ENCODE measurements at regions of chr13 and their contacts with region 1.

Region 1: GRCh38 chr13:45396533-45397095 is 21.6 kb downstream of the SLC25A30 start:
- DNase-seq: no peak
- ATAC-seq: peak in 4 of 8 donors; percentile 10 to 43 (median 20)
- H3K4me3 ChIP-seq: no peak overlapping the region
- H3K27ac ChIP-seq: peak overlapping the region; percentile 8 to 75 (median 56)
- H3K4me1 ChIP-seq: peaks cover 0 to 78% (median 35%) of the 10 kb centered on the region in 9 donors
- H3K27me3 ChIP-seq: no peaks in the 10 kb centered on the region
- CTCF ChIP-seq: no peak

Region 2: DNA sequence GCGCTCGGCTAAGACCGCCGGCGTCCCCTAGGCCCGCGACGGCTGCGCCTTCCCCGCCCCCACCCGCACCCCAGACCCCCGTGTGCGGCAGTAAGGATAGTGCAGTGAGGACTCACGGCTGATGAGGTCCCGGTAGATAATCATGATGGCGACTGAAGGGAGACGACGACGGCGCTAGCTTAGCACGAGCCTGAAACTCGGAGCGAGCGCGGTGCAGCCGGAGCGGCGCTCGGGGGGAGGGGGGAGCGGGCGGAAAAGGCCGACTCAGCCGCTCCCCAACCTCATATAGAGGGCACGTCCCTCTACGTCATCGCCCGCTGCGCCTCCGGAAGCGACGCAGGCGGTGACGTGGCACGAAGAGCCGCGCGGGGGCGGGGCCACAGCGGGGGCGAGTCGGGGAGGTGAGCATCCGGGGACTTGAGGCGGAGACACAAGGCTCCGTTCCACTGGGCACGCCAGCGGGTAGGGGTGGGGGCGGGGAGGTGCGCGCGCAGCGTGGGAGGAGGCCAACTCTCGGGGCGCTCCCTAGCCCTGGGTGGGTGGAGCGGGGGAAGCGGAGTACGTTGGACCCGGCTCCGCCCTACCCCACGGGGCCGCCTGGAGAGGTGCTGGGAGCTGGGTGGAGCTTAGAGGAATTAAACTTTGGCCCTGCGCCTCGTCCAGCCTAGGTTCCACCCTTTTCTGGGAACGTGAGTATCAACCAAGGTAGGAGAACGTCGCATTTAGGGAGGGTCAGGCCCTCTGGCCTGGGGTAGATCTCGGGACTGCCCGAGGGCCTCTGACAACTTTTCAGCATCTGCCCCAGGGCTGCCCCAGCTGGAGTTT is 55.5 kb before region 1 on chr13 and contains the start of gene TPT1:
- intact Hi-C with region 1: loop called in 1 of 10 experiments (anchors 5 kb)
- DNase-seq: peak; percentile 99
- ATAC-seq: peak; percentile 91 to 97 (median 94)
- H3K4me3 ChIP-seq: peak within 1 kb of the TSS; percentile 75 to 99 (median 95)
- H3K27ac ChIP-seq: peak within 1 kb of the TSS; percentile 100
- H3K4me1 ChIP-seq: peaks cover 16 to 52% (median 49%) of the 10 kb centered on the region in 9 donors
- H3K27me3 ChIP-seq: no peaks in the 10 kb centered on the region
- CTCF ChIP-seq: no peak
- total RNA-seq, gene TPT1: 3,297 to 4,965 (median 3,717) TPM

Measured in heart right ventricle (tissue), 16 donors.